ENCODE measurements at regions of chr15 and their contacts with region 1.

Region 1: DNA sequence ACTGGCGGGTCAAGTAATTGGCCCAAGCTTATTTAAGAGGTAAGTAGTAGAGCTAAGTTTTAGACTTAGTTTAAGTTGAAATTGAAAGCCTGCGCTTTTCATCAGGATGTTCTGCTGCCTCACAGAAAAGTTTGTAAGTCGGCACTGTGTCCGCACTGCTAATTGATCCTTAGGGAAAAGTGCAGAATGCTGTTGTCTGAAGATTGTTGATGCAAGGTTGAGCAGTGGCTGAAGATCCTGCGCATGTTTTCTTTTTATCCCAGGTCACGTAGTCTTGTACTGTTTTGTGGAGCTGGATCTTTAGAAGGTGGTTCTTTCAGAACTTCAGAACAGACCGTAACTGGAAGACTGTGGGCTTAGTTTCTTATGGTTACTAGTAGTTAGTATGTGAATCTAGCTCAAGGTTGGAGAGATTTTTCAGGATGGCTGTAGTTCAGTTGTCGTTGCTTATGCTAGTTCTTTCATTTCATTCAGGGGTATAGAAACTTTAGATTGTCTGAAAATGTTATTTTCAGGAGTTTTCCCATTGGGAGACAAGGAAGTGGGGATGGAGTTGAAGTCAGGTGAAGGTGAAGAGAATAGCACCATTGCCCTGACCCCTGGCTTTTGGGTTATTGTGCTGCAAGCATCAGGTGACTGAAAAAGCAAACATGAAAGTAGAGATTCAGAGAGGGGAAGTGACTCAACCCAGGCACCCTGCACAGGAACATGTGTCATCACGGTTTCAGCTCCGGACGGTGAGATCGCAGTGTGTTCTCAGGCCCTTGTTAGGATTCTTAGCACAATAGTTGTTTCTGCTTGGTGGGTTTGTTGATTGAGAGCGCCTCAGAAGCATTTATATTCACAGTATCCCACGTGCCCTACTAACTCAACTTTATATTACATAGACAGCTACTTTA is 32.8 kb downstream of the AKAP13 start:
- DNase-seq: peak; percentile 88
- ATAC-seq: peak; percentile 95
- H3K4me3 Mint-ChIP-seq: peak overlapping the region; percentile 16
- H3K27ac Mint-ChIP-seq: peak overlapping the region; percentile 77
- H3K4me1 Mint-ChIP-seq: peaks cover 79% of the 10 kb centered on the region
- H3K27me3 Mint-ChIP-seq: no peaks in the 10 kb centered on the region

Region 2: DNA sequence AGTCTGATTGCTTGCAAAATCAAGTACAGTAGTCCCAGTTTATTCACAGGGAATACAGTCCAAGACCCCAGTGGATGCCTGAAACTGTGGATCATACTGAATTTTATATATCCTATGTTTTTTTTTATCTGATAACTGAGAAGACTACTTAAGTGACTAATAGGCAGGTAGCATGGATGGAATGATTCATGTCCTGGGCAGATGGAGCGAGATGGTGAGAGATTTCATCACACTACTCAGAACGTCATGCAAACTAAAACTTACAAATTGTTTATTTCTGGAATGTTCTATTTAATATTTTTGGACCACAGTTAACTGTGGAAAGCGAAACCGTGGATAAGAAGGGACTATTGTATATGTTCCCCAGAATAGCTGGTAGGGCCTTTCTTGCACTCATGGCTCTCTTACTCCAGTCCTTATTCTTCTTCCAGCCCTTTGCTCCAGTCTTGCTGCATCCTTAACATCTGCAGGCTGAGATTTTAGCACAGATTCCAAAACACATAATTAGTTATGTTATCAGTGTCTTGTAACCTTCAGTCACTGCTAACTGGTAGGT is 1469.3 kb before region 1 on chr15:
- CTCF ChIA-PET with region 1: no interaction called
- POLR2A ChIA-PET with region 1: no interaction called
- intact Hi-C with region 1: no loop called
- DNase-seq: no peak
- ATAC-seq: no peak
- H3K4me3 Mint-ChIP-seq: no peak overlapping the region
- H3K27ac Mint-ChIP-seq: no peak overlapping the region
- H3K4me1 Mint-ChIP-seq: no peaks in the 10 kb centered on the region
- H3K27me3 Mint-ChIP-seq: peaks cover 3% of the 10 kb centered on the region

Region 3: DNA sequence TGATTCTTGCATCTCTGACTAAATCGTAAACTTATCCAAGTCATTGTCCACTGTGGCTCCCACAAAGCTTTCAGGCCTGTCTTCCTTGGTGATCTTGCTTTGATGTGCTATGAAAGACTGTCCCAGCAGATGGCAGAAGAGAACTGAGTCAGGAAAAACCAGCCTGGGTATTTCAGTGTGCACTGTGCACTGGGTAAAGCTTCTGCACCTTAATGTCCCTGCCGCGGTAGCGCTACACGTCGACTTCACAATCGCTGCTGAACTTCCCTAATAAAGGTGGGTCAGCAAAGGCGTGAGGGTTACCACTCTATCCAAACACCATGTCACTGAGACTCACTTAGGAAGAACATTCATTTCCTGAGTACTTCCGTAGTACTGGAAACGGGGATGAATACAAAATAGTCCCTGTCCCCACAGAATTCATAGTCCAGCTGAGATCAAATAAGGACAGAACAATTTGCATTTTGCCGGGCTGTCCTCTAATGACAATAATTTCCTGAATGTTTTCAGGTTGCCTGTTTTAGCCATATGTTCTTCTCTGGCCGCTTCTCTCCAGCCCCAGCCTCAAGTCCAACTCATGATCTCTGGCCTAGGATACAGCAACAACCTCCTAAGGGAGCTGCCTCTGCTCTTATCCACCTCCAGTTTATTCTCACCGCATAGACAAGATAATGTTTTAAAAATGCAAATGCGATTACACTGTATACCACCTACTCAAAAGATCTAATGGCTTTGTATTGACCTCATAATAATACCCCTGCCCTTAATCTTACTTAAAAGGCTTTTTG is 116.4 kb before region 1 on chr15:
- CTCF ChIA-PET with region 1: interaction called, 24 read pairs
- POLR2A ChIA-PET with region 1: no interaction called
- intact Hi-C with region 1: loop called (anchors 1 kb)
- DNase-seq: peak; percentile 79
- ATAC-seq: peak; percentile 100
- H3K4me3 Mint-ChIP-seq: no peak overlapping the region
- H3K27ac Mint-ChIP-seq: peak overlapping the region; percentile 38
- H3K4me1 Mint-ChIP-seq: peaks cover 11% of the 10 kb centered on the region
- H3K27me3 Mint-ChIP-seq: peaks cover 1% of the 10 kb centered on the region

Region 4: GRCh38 chr15:85330901-85331588 is 82.2 kb before region 1 on chr15:
- CTCF ChIA-PET with region 1: interaction called, 22 read pairs
- POLR2A ChIA-PET with region 1: no interaction called
- intact Hi-C with region 1: loop called (anchors 1 to 2 kb)
- DNase-seq: peak; percentile 81
- ATAC-seq: peak; percentile 77
- H3K4me3 Mint-ChIP-seq: peak overlapping the region; percentile 80
- H3K27ac Mint-ChIP-seq: peak overlapping the region; percentile 88
- H3K4me1 Mint-ChIP-seq: peaks cover 46% of the 10 kb centered on the region
- H3K27me3 Mint-ChIP-seq: no peaks in the 10 kb centered on the region

Region 5: GRCh38 chr15:85380217-85380811 is 32.9 kb before region 1 on chr15 and contains the start of gene AKAP13:
- CTCF ChIA-PET with region 1: interaction called, 7 read pairs
- POLR2A ChIA-PET with region 1: interaction called, 6 read pairs
- intact Hi-C with region 1: loop called (anchors 1 kb)
- DNase-seq: peak; percentile 97
- ATAC-seq: peak; percentile 90
- H3K4me3 Mint-ChIP-seq: peak within 1 kb of the TSS; percentile 72
- H3K27ac Mint-ChIP-seq: peak within 1 kb of the TSS; percentile 92
- H3K4me1 Mint-ChIP-seq: peaks cover 50% of the 10 kb centered on the region
- H3K27me3 Mint-ChIP-seq: no peaks in the 10 kb centered on the region
- total RNA-seq, gene AKAP13: 85.1 to 104 TPM

Region 6: DNA sequence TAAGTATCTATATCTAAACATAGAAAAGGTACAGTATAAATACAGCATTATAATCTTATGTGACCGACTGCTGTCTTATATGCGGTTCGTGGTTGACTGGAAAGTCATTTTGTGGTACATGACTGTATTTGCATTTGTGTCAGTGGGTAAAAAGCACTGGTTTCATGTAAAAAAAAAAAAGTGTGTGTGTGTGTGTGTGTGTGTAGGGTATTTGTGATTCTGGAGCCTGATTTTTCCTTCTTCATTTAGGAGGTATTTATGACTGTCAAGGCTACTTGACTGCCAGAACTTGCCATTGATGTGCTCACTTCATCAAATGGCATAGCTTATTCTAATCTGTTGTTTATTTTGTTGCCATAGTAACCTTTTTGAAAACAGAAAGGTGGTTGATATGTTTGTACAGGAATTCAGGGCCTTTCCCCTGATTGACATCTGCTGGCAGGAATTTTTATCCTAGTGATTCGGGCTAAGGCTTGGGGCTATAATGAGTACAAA is 30.4 kb after region 1 on chr15:
- CTCF ChIA-PET with region 1: interaction called, 4 read pairs
- POLR2A ChIA-PET with region 1: interaction called, 3 read pairs
- intact Hi-C with region 1: loop called (anchors 1 to 5 kb)
- DNase-seq: peak; percentile 49
- ATAC-seq: peak; percentile 81
- H3K4me3 Mint-ChIP-seq: peak overlapping the region; percentile 10
- H3K27ac Mint-ChIP-seq: peak overlapping the region; percentile 41
- H3K4me1 Mint-ChIP-seq: peaks cover 48% of the 10 kb centered on the region
- H3K27me3 Mint-ChIP-seq: no peaks in the 10 kb centered on the region

Region 7: GRCh38 chr15:85707519-85708338 is 294.5 kb after region 1 on chr15:
- CTCF ChIA-PET with region 1: interaction called, 4 read pairs
- POLR2A ChIA-PET with region 1: interaction called, 3 read pairs
- intact Hi-C with region 1: loop called (anchors 2 to 5 kb)
- DNase-seq: peak; percentile 47
- ATAC-seq: peak; percentile 13
- H3K4me3 Mint-ChIP-seq: peak overlapping the region; percentile 68
- H3K27ac Mint-ChIP-seq: peak overlapping the region; percentile 96
- H3K4me1 Mint-ChIP-seq: peaks cover 90% of the 10 kb centered on the region
- H3K27me3 Mint-ChIP-seq: no peaks in the 10 kb centered on the region